Sigmoid colon (tissue), 7 donors: ENCODE measurements at regions of chr1 and their contacts with region 1.

Region 1: GRCh38 chr1:226827968-226828513 is 42.4 kb upstream of the PSEN2 start:
- DNase-seq: peak; percentile 98
- H3K4me3 ChIP-seq: peak overlapping the region in 3 of 4 donors; percentile 17 to 28 (median 21)
- H3K27ac ChIP-seq: peak overlapping the region; percentile 83 to 90 (median 88)
- H3K4me1 ChIP-seq: peaks cover 0 to 23% (median 16%) of the 10 kb centered on the region in 4 donors
- H3K27me3 ChIP-seq: no peaks in the 10 kb centered on the region
- CTCF ChIP-seq: peak in 3 of 4 experiments; percentile 92 to 96 (median 95)
- EP300 ChIP-seq: no peak
- POLR2A ChIP-seq: no peak

Region 2: DNA sequence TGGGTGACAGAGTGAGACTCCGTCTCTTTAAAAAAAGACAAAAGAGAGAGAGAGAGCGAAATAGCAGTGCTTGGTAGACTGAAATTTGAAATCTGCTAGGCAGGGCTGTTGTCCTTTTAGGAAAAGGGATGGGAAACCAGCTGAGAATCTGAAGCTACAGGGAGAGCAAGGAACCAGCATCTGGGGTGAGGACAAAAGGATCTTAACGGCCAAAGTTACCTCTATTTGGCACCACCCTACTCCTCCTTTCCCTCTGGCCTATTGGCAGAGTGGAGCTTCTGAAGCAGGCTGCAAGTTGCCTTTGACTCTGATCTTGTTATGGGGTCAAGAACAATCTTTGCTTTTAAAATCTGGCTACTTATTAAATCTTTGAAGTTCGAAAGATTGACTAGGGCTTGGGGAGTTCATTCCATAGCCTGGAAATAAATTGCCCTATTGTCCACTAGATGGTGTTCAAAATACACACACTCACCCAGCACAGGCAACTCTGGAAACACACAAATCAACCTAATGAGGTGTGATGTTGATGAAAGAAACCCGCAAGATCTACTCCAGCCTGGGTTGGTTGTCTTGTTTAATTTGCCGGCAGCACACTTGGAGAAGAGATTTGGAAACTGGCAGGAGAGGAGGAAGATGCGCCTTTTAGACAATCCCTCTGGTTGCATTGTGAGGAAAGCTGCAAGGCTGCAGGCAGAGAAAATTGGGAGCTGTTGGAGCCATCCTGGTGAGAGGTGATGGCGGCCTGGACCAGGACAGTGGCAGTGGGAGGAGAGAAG is 403.6 kb before region 1 on chr1:
- intact Hi-C with region 1: loop called (anchors 10 kb)
- DNase-seq: no peak
- H3K4me3 ChIP-seq: no peak overlapping the region
- H3K27ac ChIP-seq: no peak overlapping the region
- H3K4me1 ChIP-seq: peaks cover 0 to 7% (median 3%) of the 10 kb centered on the region in 4 donors
- H3K27me3 ChIP-seq: no peaks in the 10 kb centered on the region
- CTCF ChIP-seq: peak in 3 of 4 experiments; percentile 47 to 59 (median 48)
- EP300 ChIP-seq: no peak
- POLR2A ChIP-seq: no peak

Region 3: GRCh38 chr1:226547754-226548191 is 280.3 kb before region 1 on chr1:
- intact Hi-C with region 1: loop called (anchors 2 kb)
- DNase-seq: peak; percentile 95
- H3K4me3 ChIP-seq: peak overlapping the region in 3 of 4 donors; percentile 73 to 76 (median 75)
- H3K27ac ChIP-seq: peak overlapping the region; percentile 79 to 93 (median 91)
- H3K4me1 ChIP-seq: peaks cover 0 to 59% (median 43%) of the 10 kb centered on the region in 4 donors
- H3K27me3 ChIP-seq: peaks cover 0 to 8% (median 0%) of the 10 kb centered on the region in 3 donors
- CTCF ChIP-seq: peak; percentile 88 to 92 (median 90)
- EP300 ChIP-seq: no peak
- POLR2A ChIP-seq: peak in 1 of 2 donors; percentile 7

Region 4: GRCh38 chr1:226626577-226626956 is 201.5 kb before region 1 on chr1:
- intact Hi-C with region 1: loop called (anchors 2 kb)
- DNase-seq: peak; percentile 94
- H3K4me3 ChIP-seq: no peak overlapping the region
- H3K27ac ChIP-seq: peak overlapping the region; percentile 44 to 85 (median 62)
- H3K4me1 ChIP-seq: peaks cover 0 to 42% (median 26%) of the 10 kb centered on the region in 4 donors
- H3K27me3 ChIP-seq: no peaks in the 10 kb centered on the region
- CTCF ChIP-seq: peak; percentile 87 to 98 (median 89)
- EP300 ChIP-seq: peak in 1 of 4 donors; percentile 1
- POLR2A ChIP-seq: no peak

Region 5: DNA sequence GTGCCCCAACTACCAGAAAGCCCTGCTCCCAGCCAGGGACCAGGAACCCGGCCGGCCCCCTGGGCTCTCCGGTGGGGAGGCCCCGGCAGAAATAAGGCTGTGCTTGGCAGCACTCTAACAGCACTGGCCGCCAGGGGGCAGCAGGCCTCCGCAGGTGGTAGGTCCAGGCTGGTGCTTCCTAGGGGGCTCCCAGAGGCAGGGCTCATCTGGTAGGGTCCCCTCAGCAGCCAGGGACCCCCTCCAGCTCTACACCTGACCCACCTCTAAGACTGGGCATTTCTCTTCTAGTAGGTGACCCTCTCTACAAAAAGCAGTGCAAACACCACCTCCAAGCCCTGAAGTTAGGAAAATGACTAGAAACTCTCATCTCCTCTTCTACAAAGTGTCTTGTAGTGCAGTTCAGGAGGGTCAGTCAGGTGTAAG is 193.9 kb before region 1 on chr1:
- intact Hi-C with region 1: loop called (anchors 1 kb)
- DNase-seq: peak; percentile 93
- H3K4me3 ChIP-seq: no peak overlapping the region
- H3K27ac ChIP-seq: peak overlapping the region; percentile 75 to 85 (median 80)
- H3K4me1 ChIP-seq: peaks cover 0 to 62% (median 57%) of the 10 kb centered on the region in 4 donors
- H3K27me3 ChIP-seq: no peaks in the 10 kb centered on the region
- CTCF ChIP-seq: peak; percentile 80 to 97 (median 94)
- EP300 ChIP-seq: no peak
- POLR2A ChIP-seq: no peak

Region 6: GRCh38 chr1:226702957-226703831 is 124.8 kb before region 1 on chr1:
- intact Hi-C with region 1: loop called (anchors 10 kb)
- DNase-seq: peak; percentile 89
- H3K4me3 ChIP-seq: peak overlapping the region; percentile 37 to 57 (median 54)
- H3K27ac ChIP-seq: peak overlapping the region in 1 of 4 donors; percentile 91
- H3K4me1 ChIP-seq: peaks cover 0 to 83% (median 81%) of the 10 kb centered on the region in 4 donors
- H3K27me3 ChIP-seq: no peaks in the 10 kb centered on the region
- CTCF ChIP-seq: no peak
- EP300 ChIP-seq: peak in 1 of 4 donors; percentile 2
- POLR2A ChIP-seq: peak; percentile 20 to 46

Region 7: DNA sequence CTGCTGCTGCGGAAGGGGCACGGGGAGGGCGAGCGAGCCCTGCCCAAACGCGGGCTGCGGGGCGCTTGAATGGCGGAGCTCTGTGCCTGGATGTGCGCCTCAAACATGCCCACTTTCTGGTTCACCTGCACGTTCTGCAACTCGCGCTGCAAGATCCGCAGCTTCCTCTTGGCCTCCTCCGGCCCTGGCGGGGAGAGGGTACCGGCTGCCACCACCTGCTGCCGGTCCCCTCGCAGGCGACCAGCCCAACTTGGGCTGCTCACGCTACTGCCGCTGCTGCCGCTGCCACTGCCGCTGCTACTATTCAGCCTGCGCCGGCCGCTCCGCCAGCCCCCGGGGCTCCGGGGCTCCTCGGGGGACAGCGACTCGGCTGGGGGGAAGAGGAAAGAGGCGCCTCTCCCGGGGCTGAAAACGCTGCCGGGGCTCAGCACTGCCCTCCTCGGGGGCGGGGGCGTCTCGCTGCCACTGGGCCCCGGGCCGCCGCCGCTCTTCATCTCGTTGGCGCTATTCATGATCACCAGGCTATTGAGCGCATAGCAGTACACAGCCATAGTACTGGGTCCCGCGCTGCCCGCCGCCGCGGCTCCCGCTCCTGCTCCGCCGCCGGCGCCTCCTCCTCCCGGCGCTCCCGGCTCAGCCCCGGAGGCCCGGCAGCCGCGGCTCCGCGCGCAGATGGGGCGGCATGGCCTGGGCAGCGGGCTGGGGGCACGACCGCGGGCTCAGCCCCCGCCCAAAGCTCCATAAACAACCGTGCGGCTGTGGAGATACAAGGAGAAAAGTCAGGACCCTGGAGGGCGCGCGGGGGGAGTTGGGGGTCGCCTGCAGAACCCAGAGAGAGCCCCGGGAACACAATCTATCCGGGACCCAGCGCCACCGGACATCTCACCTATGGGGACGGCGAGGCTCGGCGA is 90.9 kb before region 1 on chr1:
- intact Hi-C with region 1: loop called (anchors 2 kb)
- DNase-seq: peak; percentile 78
- H3K4me3 ChIP-seq: peak overlapping the region; percentile 83 to 94 (median 86)
- H3K27ac ChIP-seq: peak overlapping the region; percentile 90 to 97 (median 94)
- H3K4me1 ChIP-seq: peaks cover 0 to 58% (median 55%) of the 10 kb centered on the region in 4 donors
- H3K27me3 ChIP-seq: no peaks in the 10 kb centered on the region
- CTCF ChIP-seq: no peak
- EP300 ChIP-seq: no peak
- POLR2A ChIP-seq: peak in 1 of 2 donors; percentile 15